A673 (cell line): ENCODE measurements at regions of chr9 and their contacts with region 1.

Region 1: GRCh38 chr9:87529671-87530070 is 32.0 kb downstream of the DAPK1 start:
- DNase-seq: peak; percentile 48
- H3K4me3 ChIP-seq: no peak overlapping the region
- H3K27ac ChIP-seq: peak overlapping the region; percentile 76
- H3K4me1 ChIP-seq: peaks cover 84% of the 10 kb centered on the region
- H3K27me3 ChIP-seq: no peaks in the 10 kb centered on the region
- CTCF ChIP-seq: no peak

Region 2: DNA sequence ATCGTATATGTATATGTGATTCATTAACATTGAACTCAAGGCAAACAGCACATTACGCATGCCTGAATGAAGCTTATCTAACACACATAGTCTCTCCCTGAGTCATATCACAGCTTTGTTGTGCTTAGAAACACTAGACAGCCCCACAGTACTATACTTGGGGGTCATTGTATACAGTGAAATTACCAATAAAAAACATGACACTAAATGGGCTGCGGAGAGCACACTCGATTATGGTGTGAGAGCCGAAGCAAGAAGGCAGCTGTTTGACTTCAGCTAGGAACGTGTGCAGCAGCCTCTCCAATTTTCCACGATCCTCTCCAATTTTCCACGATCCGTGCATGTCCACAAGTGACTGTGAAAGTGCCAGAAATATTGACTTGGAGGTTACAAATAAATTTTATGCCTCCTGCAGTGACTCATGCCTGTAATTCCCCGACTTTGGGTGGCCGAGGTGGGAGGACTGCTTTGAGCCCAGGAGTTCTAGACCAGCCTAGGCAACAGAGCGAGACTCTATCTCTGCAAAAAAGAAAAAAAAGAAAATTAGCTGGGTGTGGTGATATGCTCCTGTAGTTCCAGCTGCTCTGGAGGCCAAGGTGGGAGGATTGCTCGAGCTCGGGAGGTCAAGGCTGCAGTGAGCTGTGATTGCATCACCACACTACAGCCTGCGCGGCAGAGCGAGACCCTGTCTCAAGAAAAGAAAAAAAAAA is 70.4 kb after region 1 on chr9:
- CTCF ChIA-PET with region 1: no interaction called
- POLR2A ChIA-PET with region 1: no interaction called
- intact Hi-C with region 1: loop called (anchors 5 kb)
- DNase-seq: peak; percentile 67
- H3K4me3 ChIP-seq: no peak overlapping the region
- H3K27ac ChIP-seq: no peak overlapping the region
- H3K4me1 ChIP-seq: peaks cover 87% of the 10 kb centered on the region
- H3K27me3 ChIP-seq: no peaks in the 10 kb centered on the region
- CTCF ChIP-seq: no peak

Region 3: DNA sequence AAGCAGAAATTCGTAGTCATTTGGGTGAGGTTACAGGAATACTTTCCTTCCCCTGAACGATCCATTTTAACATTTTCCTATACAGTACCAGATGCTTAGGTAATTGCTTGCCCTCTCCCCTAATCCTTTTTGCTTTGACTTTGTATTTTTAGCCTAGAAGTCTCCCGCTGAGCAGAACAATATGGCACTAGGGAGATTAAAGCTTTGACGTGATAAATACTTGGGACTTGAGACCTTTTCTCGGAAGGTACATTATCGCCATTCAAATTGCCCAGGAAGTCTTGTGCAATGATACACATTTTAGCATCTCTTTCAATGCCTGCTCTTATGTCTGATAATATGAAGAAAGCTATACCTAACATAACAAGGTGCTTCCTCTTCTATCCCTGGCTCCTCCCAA is 631.5 kb after region 1 on chr9:
- CTCF ChIA-PET with region 1: no interaction called
- POLR2A ChIA-PET with region 1: interaction called, 12 read pairs
- intact Hi-C with region 1: no loop called
- DNase-seq: peak; percentile 92
- H3K4me3 ChIP-seq: no peak overlapping the region
- H3K27ac ChIP-seq: peak overlapping the region; percentile 74
- H3K4me1 ChIP-seq: peaks cover 21% of the 10 kb centered on the region
- H3K27me3 ChIP-seq: no peaks in the 10 kb centered on the region
- CTCF ChIP-seq: no peak